OCI-LY7 (cell line): ENCODE measurements at regions of chr17 and their contacts with region 1.

Region 1: GRCh38 chr17:71412803-71413202 is 708.0 kb upstream of the SOX9 start:
- DNase-seq: peak; percentile 84
- H3K4me3 ChIP-seq: peak overlapping the region; percentile 7
- H3K27ac ChIP-seq: peak overlapping the region; percentile 59
- H3K4me1 ChIP-seq: peaks cover 50% of the 10 kb centered on the region
- CTCF ChIP-seq: no peak

Region 2: GRCh38 chr17:71402661-71403141 is 10.1 kb before region 1 on chr17:
- CTCF ChIA-PET with region 1: no interaction called
- POLR2A ChIA-PET with region 1: interaction called, 12 read pairs
- intact Hi-C with region 1: no loop called
- DNase-seq: no peak
- H3K4me3 ChIP-seq: no peak overlapping the region
- H3K27ac ChIP-seq: no peak overlapping the region
- H3K4me1 ChIP-seq: peaks cover 27% of the 10 kb centered on the region
- CTCF ChIP-seq: 0 out of 2 replicates have a peak, but pooled peaks have one; percentile 5

Region 3: GRCh38 chr17:71423871-71424546 is 11.2 kb after region 1 on chr17:
- CTCF ChIA-PET with region 1: no interaction called
- POLR2A ChIA-PET with region 1: interaction called, 12 read pairs
- intact Hi-C with region 1: loop called (anchors 1 kb)
- DNase-seq: peak; percentile 95
- H3K4me3 ChIP-seq: peak overlapping the region; percentile 61
- H3K27ac ChIP-seq: peak overlapping the region; percentile 90
- H3K4me1 ChIP-seq: peaks cover 42% of the 10 kb centered on the region
- CTCF ChIP-seq: no peak

Region 4: GRCh38 chr17:72030067-72030899 is 617.5 kb after region 1 on chr17:
- CTCF ChIA-PET with region 1: no interaction called
- POLR2A ChIA-PET with region 1: no interaction called
- intact Hi-C with region 1: loop called (anchors 5 kb)
- DNase-seq: peak; percentile 77
- H3K4me3 ChIP-seq: peak overlapping the region; percentile 69
- H3K27ac ChIP-seq: peak overlapping the region; percentile 87
- H3K4me1 ChIP-seq: peaks cover 83% of the 10 kb centered on the region
- CTCF ChIP-seq: peak; percentile 46